ENCODE measurements at regions of chr12 and their contacts with region 1.

Region 1: GRCh38 chr12:110704748-110705147 is 15.8 kb upstream of the HVCN1 start:
- DNase-seq: no peak

Region 2: GRCh38 chr12:110826592-110827200 is 121.9 kb after region 1 on chr12:
- intact Hi-C with region 1: loop called in 1 of 2 experiments (anchors 5 kb)
- DNase-seq: peak; percentile 96

Region 3: GRCh38 chr12:110888256-110888991 is 183.7 kb after region 1 on chr12:
- intact Hi-C with region 1: loop called in 1 of 2 experiments (anchors 10 kb)
- DNase-seq: no peak

Measured in posterior vena cava (tissue), 2 donors.